Breast epithelium (tissue), 4 donors: ENCODE measurements at regions of chr5 and their contacts with region 1.

Region 1: DNA sequence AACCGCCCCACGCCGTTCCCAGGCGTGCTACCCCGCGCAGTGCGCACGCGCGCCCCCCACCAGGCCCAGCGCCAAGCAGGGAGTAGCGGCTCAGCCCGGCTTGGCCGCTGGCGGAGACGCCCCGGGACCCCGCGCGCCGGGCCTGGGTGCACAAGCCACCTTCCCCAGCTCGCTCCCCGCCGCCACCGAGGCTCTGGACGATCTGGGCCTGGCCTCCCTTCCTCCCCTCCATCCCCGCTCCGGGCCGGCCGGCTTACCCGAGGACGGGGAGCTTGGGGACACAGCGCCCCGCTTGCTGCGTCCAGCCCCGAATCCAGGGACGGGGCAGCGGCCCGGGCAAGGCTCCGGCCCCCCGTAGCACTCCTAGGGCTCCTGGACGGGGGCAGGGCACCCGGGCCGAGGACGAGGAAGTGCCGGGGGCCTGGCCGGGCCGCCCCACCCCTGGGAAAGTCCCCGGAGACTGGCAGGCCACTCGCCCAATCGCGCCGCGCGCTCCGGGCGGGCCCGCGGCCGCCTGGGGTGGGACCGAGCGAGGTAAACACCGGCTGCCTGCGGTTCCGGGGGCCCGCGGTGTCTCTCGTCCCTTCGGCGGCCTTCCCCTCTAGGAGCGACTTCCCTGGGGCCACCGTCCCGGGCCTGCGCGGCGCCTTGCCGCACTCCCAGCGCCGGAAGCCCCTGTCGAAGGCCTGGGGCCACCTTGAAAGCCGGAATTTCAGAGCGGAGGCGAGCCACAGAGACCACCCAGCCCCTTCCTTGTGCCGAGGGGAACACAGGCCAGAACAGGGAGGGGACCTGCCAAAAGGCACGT is at the start of gene TNIP1:
- DNase-seq: peak; percentile 88
- H3K4me3 ChIP-seq: peak within 1 kb of the TSS; percentile 71 to 96 (median 90)
- H3K27ac ChIP-seq: peak within 1 kb of the TSS; percentile 99
- H3K4me1 ChIP-seq: peaks cover 0 to 29% of the 10 kb centered on the region in 2 donors
- H3K27me3 ChIP-seq: no peaks in the 10 kb centered on the region
- CTCF ChIP-seq: no peak
- POLR2A ChIP-seq: peak; percentile 82
- total RNA-seq, gene TNIP1: 65.3 to 221 (median 91.8) TPM

Region 2: DNA sequence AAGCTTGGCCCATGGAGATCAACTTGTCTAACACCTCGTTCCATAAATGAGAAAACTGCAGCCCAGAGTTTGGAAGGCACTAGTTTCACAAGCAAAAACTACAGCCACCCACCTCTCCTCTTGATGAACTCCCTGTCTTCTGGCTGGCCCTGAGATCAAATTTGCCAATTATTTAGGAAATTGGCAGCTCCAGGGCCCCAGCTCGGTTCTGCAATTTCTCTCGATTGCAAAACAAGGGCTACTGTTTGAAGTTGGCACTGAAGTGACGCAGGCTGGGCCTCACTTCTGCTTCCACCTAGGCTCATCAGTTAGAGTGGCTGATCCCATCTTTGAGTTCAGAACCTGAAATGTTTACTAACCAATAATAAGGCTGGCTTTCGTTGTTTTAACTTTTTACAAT is 64.1 kb before region 1 on chr5:
- intact Hi-C with region 1: no loop called
- DNase-seq: peak in 1 of 2 donors; percentile 63
- H3K4me3 ChIP-seq: no peak overlapping the region
- H3K27ac ChIP-seq: peak overlapping the region; percentile 40 to 48
- H3K4me1 ChIP-seq: no peaks in the 10 kb centered on the region
- H3K27me3 ChIP-seq: no peaks in the 10 kb centered on the region
- CTCF ChIP-seq: no peak
- POLR2A ChIP-seq: no peak

Region 3: DNA sequence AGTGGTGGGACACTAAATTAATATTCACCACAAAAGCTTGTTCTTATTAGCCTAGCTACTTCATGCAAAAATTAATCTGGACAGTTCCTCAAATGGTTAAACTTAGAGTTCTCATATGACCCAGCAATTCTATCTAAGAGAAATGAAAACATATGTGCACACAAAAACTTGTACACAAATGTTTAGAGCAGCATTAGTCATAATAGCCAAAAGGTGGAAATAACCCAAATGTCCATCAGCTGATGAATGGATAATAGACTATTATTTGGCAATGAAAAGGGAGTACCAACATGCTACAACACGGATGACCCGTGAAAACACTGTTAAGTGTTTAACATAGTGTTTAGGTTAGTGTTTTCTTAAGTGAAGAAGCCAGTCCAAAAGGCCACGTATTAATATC is 32.8 kb after region 1 on chr5:
- intact Hi-C with region 1: loop called (anchors 2 kb)
- DNase-seq: no peak
- H3K4me3 ChIP-seq: no peak overlapping the region
- H3K27ac ChIP-seq: no peak overlapping the region
- H3K4me1 ChIP-seq: no peaks in the 10 kb centered on the region
- H3K27me3 ChIP-seq: no peaks in the 10 kb centered on the region
- CTCF ChIP-seq: no peak
- POLR2A ChIP-seq: no peak